PC-9 (cell line): ENCODE measurements at regions of chr1 and their contacts with region 1.

Region 1: DNA sequence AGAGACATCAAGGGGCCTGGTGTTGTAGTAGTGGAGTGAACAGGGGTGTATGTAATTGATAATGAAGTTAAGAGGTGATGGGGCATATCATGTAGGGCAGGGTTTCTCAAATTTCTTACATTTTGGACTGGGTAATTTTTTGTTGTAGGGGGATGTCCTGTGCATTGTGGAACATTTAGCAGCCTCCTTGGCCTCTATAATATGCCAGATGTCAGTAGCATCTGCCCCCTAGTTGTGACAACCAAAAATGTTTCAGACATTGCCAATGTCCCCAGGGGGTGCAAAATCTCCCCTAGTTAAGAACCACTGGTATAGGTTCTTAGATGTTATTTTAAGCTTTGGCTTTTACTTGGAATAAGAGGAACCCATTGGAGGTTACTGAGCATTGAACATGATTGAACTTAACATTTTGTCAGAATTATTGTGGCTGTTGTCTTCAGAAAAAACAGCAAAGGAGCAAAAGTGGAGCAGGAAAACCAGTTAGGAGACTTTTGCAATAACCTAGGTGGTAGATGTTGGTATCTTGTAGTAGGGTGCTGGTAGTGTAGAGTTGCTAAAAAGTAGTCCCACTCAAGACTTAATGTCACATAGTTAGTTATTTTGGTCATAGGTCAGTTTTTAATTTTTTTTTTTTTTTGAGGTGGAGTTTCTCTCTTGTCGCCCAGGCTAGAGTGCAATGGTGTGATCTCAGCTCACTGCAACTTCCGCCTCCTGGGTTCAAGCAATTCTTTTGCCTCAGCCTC is 6.2 kb downstream of the ZNF326 start:
- DNase-seq: no peak
- H3K4me3 ChIP-seq: no peak overlapping the region
- H3K27ac ChIP-seq: 0 out of 2 replicates have a peak overlapping the region, but pooled peaks have one; percentile 4
- H3K4me1 ChIP-seq: peaks cover 70% of the 10 kb centered on the region
- H3K27me3 ChIP-seq: no peaks in the 10 kb centered on the region
- CTCF ChIP-seq: no peak

Region 2: GRCh38 chr1:89605692-89606091 is 395.4 kb before region 1 on chr1:
- CTCF ChIA-PET with region 1: interaction called, 10 read pairs
- POLR2A ChIA-PET with region 1: no interaction called
- intact Hi-C with region 1: loop called (anchors 10 kb)
- DNase-seq: peak; percentile 81 to 94
- H3K4me3 ChIP-seq: no peak overlapping the region
- H3K27ac ChIP-seq: no peak overlapping the region
- H3K4me1 ChIP-seq: peaks cover 20% of the 10 kb centered on the region
- H3K27me3 ChIP-seq: no peaks in the 10 kb centered on the region
- CTCF ChIP-seq: no peak

Region 3: DNA sequence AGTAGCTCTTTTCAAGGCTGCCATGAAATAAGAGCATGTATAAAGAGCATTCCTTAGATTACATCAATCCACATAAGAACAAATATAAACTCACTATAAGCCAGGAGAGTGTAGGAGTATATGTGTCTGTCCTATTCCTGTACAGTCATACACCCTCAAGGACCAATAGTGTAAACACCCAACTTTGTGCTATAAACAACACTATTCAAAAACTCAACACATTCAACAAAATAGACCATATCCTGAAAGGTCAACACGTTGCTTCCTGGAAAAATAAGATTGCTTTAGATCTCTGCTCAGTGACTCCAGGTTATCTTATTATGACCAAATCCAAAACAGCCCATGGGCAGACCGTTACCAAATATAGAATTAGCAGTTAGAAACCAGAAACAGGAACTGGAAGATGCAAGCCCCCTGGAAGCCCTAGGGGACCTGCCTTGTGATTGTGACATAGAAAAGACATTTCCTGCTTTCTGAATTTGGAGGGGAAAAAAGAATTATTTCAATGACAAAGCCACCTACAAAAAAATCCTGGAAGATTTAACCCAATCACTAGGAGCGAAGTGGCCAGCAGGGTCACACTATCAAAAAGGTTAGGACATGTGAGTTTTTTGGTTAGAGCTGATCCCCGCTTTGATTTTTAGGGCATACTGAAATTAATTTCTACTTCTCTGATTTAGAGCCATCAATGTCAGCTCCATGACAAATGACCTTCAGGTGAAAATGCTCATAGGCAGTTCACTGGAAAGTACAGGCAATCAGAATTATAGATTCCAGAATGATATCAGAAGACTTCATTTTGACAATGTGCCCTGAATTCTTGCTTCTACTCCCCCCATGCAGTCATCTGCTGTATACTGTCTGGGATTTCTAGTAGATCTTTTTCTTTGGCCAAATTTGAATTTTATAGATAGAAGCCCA is 308.2 kb before region 1 on chr1:
- CTCF ChIA-PET with region 1: no interaction called
- POLR2A ChIA-PET with region 1: no interaction called
- intact Hi-C with region 1: no loop called
- DNase-seq: no peak
- H3K4me3 ChIP-seq: no peak overlapping the region
- H3K27ac ChIP-seq: no peak overlapping the region
- H3K4me1 ChIP-seq: no peaks in the 10 kb centered on the region
- H3K27me3 ChIP-seq: no peaks in the 10 kb centered on the region
- CTCF ChIP-seq: no peak